ENCODE measurements at regions of chr1 and their contacts with region 1.

Region 1: DNA sequence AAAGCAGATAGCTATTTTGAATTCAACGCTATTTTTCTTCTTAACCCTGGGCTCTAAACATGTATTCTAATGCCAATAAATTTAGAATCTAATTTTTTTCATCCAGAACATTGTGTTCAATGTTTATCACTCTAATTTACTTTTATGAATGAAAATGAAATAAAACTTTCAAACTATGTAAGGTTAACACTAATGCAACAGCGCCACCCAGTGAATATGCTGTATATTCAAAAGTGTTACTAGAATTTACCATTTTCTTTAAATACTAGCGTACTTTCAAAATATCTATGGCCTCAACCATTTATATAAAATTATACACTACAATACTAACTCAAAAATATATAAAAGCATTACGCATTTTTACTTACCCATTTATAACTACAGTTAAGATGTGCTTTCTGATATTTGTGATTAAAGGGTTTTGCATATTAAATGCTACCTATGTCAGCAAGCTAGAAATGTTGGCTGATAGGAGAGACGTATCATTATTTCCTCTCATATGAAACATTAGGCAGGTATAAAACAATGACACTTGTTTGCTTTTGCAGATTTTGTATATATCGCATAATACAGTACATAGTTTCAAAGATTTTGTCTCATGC is 5.9 kb upstream of the NUF2 start:
- DNase-seq: no peak
- H3K4me3 ChIP-seq: no peak overlapping the region
- H3K27ac ChIP-seq: no peak overlapping the region
- H3K4me1 ChIP-seq: peaks cover 4% of the 10 kb centered on the region
- H3K27me3 ChIP-seq: no peaks in the 10 kb centered on the region
- CTCF ChIP-seq: peak; percentile 20 to 72 (median 70)
- POLR2A ChIP-seq: no peak

Region 2: GRCh38 chr1:162854245-162854882 is 461.5 kb before region 1 on chr1:
- intact Hi-C with region 1: loop called (anchors 10 kb)
- DNase-seq: no peak
- H3K4me3 ChIP-seq: no peak overlapping the region
- H3K27ac ChIP-seq: no peak overlapping the region
- H3K4me1 ChIP-seq: no peaks in the 10 kb centered on the region
- H3K27me3 ChIP-seq: no peaks in the 10 kb centered on the region
- CTCF ChIP-seq: peak; percentile 36 to 55 (median 53)
- POLR2A ChIP-seq: no peak

Measured in vagina (tissue), 2 donors.